T-cell (primary cell): ENCODE measurements at regions of chr1 and their contacts with region 1.

Region 1: DNA sequence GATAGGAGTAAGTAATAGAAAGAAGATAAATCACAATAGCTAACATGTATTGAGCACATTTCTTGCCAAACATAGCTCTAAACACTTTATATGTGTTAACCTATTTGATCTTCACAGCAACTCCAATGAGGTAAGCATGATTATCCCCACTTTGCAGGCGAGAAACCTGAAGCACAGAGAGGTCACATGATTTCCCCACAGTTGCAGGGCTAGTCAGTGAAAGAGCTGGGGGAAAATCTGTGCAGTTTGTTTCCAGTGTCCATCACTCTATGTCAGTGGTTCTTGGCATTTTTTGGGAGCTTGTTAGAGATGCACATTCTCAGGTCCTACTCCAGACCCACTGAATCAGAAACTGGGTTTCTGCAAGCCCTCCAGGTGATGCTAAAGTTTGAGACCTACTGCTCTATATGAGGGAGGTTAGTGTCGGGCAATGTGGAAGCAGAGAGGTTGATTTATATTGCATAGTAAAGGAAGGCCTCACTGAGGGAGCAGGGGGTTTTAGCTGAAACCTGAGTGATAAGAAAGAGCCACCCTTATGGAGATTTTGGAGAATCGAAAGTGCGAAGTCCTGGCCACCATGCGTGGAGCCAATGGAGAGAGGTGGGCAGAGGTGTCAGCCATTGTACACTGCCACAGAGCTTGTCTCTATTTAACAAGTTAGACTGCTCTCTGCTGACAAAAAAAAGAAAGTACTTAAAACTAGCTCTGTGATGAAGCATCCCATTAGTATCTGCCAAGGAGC is 20.9 kb downstream of the MCOLN3 start:
- DNase-seq: peak in 16 of 35 experiments; percentile 7 to 68 (median 21)
- ATAC-seq: peak; percentile 79 to 96 (median 87)
- H3K4me3 ChIP-seq: peak overlapping the region in 1 of 2 donors; percentile 9
- H3K4me3 Mint-ChIP-seq: peak overlapping the region; percentile 18 to 68 (median 19)
- H3K27ac ChIP-seq: peak overlapping the region; percentile 35
- H3K27ac Mint-ChIP-seq: peak overlapping the region; percentile 86 to 91
- H3K4me1 ChIP-seq: peaks cover 0 to 3% of the 10 kb centered on the region in 2 experiments
- H3K4me1 Mint-ChIP-seq: peaks cover 10 to 11% (median 10%) of the 10 kb centered on the region in 3 donors
- H3K27me3 ChIP-seq: no peaks in the 10 kb centered on the region
- H3K27me3 Mint-ChIP-seq: no peaks in the 10 kb centered on the region

Region 2: GRCh38 chr1:84620720-84621313 is 406.6 kb before region 1 on chr1:
- CTCF ChIA-PET with region 1: no interaction called
- POLR2A ChIA-PET with region 1: no interaction called
- DNase-seq: peak; percentile 45 to 86 (median 70)
- ATAC-seq: peak; percentile 91 to 95 (median 92)
- H3K4me3 ChIP-seq: peak overlapping the region; percentile 65 to 69
- H3K4me3 Mint-ChIP-seq: peak overlapping the region; percentile 81 to 87 (median 86)
- H3K27ac ChIP-seq: no peak overlapping the region
- H3K27ac Mint-ChIP-seq: peak overlapping the region in 1 of 2 donors; percentile 87
- H3K4me1 ChIP-seq: peaks cover 0 to 9% of the 10 kb centered on the region in 2 experiments
- H3K4me1 Mint-ChIP-seq: peaks cover 0 to 7% (median 5%) of the 10 kb centered on the region in 3 donors
- H3K27me3 ChIP-seq: peaks cover 0 to 3% of the 10 kb centered on the region in 2 experiments
- H3K27me3 Mint-ChIP-seq: peaks cover 0 to 4% of the 10 kb centered on the region in 2 donors

Region 3: DNA sequence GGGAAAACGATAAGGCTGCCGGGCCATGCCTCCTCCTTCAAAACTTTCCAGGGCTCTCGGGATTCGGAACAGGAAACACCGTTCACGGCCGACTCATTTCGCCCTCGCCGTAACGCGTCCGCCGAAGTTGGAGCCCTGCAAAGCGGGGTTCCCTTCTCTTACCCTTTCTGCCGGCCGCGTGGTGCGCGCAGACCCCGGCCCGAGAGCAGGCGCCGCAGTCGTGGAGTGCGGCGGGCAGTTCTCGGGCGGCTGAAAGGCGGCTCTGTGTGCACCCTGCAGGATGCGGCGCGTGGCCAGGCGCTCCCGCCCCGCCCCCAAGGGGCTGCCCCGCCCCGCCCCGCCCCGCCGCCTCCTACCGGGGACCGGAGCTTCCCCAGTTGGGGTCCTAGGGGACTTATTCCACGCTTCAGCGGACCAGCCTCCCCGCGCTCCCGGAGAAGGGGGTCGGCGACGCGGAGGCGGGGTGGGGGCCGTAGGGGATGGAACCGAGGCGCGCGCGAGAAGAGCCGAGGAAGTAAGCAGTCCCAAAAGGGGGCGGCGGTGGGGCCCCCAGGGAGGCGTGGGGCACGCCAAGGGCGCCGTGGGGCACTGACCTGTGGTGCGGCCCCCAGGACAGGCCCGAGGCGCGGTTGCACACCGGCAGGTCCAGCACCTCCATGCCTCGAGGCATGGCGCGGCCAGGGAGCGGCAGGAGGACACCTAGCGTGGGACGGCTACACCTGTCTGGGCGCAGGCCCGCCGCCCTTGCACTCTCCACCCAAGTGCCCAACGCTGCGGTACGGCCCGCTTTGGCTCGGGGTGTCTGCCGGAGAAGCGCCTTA is 30.4 kb before region 1 on chr1 and contains the start of gene MCOLN2:
- CTCF ChIA-PET with region 1: interaction called in 1 of 2 experiments, 21 read pairs
- POLR2A ChIA-PET with region 1: no interaction called
- DNase-seq: peak in 28 of 35 experiments; percentile 6 to 72 (median 32)
- ATAC-seq: peak; percentile 71 to 84 (median 77)
- H3K4me3 ChIP-seq: peak within 1 kb of the TSS; percentile 65 to 76
- H3K4me3 Mint-ChIP-seq: peak within 1 kb of the TSS; percentile 84 to 90 (median 86)
- H3K27ac ChIP-seq: peak within 1 kb of the TSS; percentile 71
- H3K27ac Mint-ChIP-seq: peak within 1 kb of the TSS; percentile 59 to 70
- H3K4me1 ChIP-seq: peaks cover 10 to 35% of the 10 kb centered on the region in 2 experiments
- H3K4me1 Mint-ChIP-seq: peaks cover 14 to 63% (median 41%) of the 10 kb centered on the region in 3 donors
- H3K27me3 ChIP-seq: peaks cover 18 to 32% of the 10 kb centered on the region in 2 experiments
- H3K27me3 Mint-ChIP-seq: peaks cover 29 to 30% of the 10 kb centered on the region in 2 donors
- total RNA-seq, gene MCOLN2: 7.6 to 19.3 (median 15.8) TPM